ENCODE measurements at regions of chr1 and their contacts with region 1.

Region 1: GRCh38 chr1:212558693-212559480 is 49.7 kb upstream of the ATF3 start:
- DNase-seq: peak; percentile 83 to 93 (median 91)
- ATAC-seq: peak; percentile 97
- H3K4me3 ChIP-seq: peak overlapping the region; percentile 54
- H3K4me3 Mint-ChIP-seq: peak overlapping the region; percentile 82 to 95 (median 90)
- H3K27ac ChIP-seq: peak overlapping the region; percentile 74
- H3K27ac Mint-ChIP-seq: peak overlapping the region; percentile 91 to 99 (median 98)
- H3K4me1 ChIP-seq: peaks cover 7 to 13% of the 10 kb centered on the region in 2 donors
- H3K4me1 Mint-ChIP-seq: peaks cover 6 to 15% (median 9%) of the 10 kb centered on the region in 7 donors
- H3K27me3 ChIP-seq: no peaks in the 10 kb centered on the region
- H3K27me3 Mint-ChIP-seq: peaks cover 0 to 45% (median 0%) of the 10 kb centered on the region in 5 donors

Region 2: DNA sequence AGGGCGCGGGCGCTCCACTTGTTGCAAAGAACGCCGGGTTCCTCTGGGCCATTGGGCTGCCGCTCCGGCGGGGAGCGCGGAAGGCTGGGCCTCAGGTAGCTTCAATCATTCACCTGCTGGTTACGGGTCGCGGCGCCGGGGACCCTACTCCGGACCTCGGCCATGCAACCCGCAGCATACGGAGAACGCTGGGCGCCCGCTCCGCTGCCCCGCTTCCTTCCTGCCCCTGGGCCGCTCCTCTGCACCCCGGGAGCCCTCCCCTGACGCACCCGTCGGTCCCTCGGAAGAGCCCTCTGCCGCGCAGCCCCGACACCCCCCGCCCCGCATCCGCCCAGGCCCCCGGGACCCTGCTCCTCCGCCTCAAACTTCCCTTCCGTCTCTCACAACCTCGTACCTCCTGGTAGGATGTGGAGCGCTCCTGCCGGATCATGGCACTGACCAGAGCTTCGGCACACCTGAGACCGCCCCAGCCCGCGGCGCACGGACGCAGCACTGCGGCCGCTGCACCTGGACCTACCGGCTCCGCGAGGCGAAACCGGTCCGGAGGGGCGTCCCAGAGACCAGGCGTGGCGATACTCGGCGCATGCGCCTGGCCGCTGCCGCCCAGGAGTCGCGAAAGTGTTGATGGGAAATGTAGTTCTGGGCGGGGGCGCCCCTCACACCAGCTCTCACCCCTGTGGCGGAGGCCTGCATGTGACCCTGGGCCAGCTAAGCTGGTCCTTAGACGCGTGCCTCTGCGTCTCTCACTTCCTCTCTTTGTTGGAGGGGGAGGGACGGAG is 144.4 kb before region 1 on chr1 and contains the start of gene PACC1:
- CTCF ChIA-PET with region 1: no interaction called
- POLR2A ChIA-PET with region 1: no interaction called
- intact Hi-C with region 1: loop called in 1 of 2 experiments (anchors 2 kb)
- DNase-seq: peak; percentile 77 to 89 (median 86)
- ATAC-seq: peak; percentile 98
- H3K4me3 ChIP-seq: peak within 1 kb of the TSS; percentile 98
- H3K4me3 Mint-ChIP-seq: peak within 1 kb of the TSS; percentile 87 to 100 (median 94)
- H3K27ac ChIP-seq: peak within 1 kb of the TSS; percentile 71
- H3K27ac Mint-ChIP-seq: peak within 1 kb of the TSS; percentile 74 to 94 (median 89)
- H3K4me1 ChIP-seq: peaks cover 15 to 19% of the 10 kb centered on the region in 2 donors
- H3K4me1 Mint-ChIP-seq: peaks cover 22 to 46% (median 40%) of the 10 kb centered on the region in 7 donors
- H3K27me3 ChIP-seq: no peaks in the 10 kb centered on the region
- H3K27me3 Mint-ChIP-seq: no peaks in the 10 kb centered on the region
- total RNA-seq, gene PACC1: 7.9 to 13.4 (median 12.0) TPM

Region 3: GRCh38 chr1:212477014-212477679 is 81.7 kb before region 1 on chr1:
- CTCF ChIA-PET with region 1: interaction called, 3 read pairs
- POLR2A ChIA-PET with region 1: no interaction called
- intact Hi-C with region 1: loop called in 1 of 2 experiments (anchors 2 kb)
- DNase-seq: peak; percentile 34 to 72 (median 65)
- ATAC-seq: peak; percentile 96
- H3K4me3 ChIP-seq: no peak overlapping the region
- H3K4me3 Mint-ChIP-seq: peak overlapping the region in 7 of 10 donors; percentile 12 to 65 (median 43)
- H3K27ac ChIP-seq: no peak overlapping the region
- H3K27ac Mint-ChIP-seq: peak overlapping the region in 1 of 9 donors; percentile 35
- H3K4me1 ChIP-seq: peaks cover 0 to 12% of the 10 kb centered on the region in 2 donors
- H3K4me1 Mint-ChIP-seq: peaks cover 3 to 22% (median 13%) of the 10 kb centered on the region in 7 donors
- H3K27me3 ChIP-seq: no peaks in the 10 kb centered on the region
- H3K27me3 Mint-ChIP-seq: peaks cover 0 to 30% (median 4%) of the 10 kb centered on the region in 5 donors

Region 4: DNA sequence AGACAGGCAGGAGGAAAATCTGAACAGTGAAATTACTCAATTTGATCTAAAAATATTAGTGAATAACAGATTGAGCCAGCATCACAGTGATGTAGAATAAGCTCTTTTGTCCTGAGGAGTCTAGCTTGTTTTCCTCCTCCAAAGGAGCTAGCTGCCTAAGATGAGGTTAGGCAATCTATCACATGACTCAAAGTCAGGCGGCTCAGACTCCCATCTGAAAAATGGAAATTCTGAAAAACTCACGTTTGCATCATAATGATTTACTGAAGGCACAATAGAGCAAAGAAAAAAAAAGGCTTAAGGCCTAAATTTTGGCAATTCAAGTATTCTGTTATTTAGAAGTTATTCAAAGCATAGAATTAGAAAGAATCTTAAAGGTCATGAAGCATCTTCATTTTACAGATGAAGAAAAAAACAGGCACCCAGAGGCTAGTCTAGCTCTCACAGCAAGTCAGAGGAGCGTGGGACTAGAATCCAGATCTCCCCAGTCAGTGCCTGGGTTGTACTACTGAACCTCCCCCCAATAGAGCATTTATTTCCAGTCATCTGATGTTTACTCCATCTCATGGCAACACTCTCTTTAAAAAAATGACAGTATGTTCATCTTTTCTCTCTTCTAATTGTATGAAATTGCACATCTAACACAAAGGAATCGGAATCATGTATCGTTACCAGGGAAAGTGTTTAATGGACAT is 12.8 kb before region 1 on chr1:
- CTCF ChIA-PET with region 1: no interaction called
- POLR2A ChIA-PET with region 1: no interaction called
- intact Hi-C with region 1: no loop called
- DNase-seq: no peak
- ATAC-seq: peak; percentile 50
- H3K4me3 ChIP-seq: no peak overlapping the region
- H3K4me3 Mint-ChIP-seq: no peak overlapping the region
- H3K27ac ChIP-seq: no peak overlapping the region
- H3K27ac Mint-ChIP-seq: no peak overlapping the region
- H3K4me1 ChIP-seq: no peaks in the 10 kb centered on the region
- H3K4me1 Mint-ChIP-seq: peaks cover 0 to 2% (median 0%) of the 10 kb centered on the region in 7 donors
- H3K27me3 ChIP-seq: no peaks in the 10 kb centered on the region
- H3K27me3 Mint-ChIP-seq: peaks cover 7 to 55% (median 18%) of the 10 kb centered on the region in 5 donors

Region 5: GRCh38 chr1:212608209-212608955 is 49.5 kb after region 1 on chr1 and contains the start of gene ATF3:
- CTCF ChIA-PET with region 1: no interaction called
- POLR2A ChIA-PET with region 1: interaction called, 3 read pairs
- intact Hi-C with region 1: loop called (anchors 1 kb)
- DNase-seq: peak; percentile 27 to 90 (median 47)
- ATAC-seq: peak; percentile 87
- H3K4me3 ChIP-seq: peak within 1 kb of the TSS; percentile 70
- H3K4me3 Mint-ChIP-seq: peak within 1 kb of the TSS; percentile 90 to 98 (median 95)
- H3K27ac ChIP-seq: no peak within 1 kb of the TSS
- H3K27ac Mint-ChIP-seq: peak within 1 kb of the TSS; percentile 40 to 98 (median 76)
- H3K4me1 ChIP-seq: peaks cover 17 to 23% of the 10 kb centered on the region in 2 donors
- H3K4me1 Mint-ChIP-seq: peaks cover 17 to 55% (median 21%) of the 10 kb centered on the region in 7 donors
- H3K27me3 ChIP-seq: peaks cover 17 to 26% of the 10 kb centered on the region in 2 donors
- H3K27me3 Mint-ChIP-seq: peaks cover 47 to 66% (median 58%) of the 10 kb centered on the region in 5 donors
- total RNA-seq, gene ATF3: 0.57 to 83.4 (median 12.5) TPM

Region 6: DNA sequence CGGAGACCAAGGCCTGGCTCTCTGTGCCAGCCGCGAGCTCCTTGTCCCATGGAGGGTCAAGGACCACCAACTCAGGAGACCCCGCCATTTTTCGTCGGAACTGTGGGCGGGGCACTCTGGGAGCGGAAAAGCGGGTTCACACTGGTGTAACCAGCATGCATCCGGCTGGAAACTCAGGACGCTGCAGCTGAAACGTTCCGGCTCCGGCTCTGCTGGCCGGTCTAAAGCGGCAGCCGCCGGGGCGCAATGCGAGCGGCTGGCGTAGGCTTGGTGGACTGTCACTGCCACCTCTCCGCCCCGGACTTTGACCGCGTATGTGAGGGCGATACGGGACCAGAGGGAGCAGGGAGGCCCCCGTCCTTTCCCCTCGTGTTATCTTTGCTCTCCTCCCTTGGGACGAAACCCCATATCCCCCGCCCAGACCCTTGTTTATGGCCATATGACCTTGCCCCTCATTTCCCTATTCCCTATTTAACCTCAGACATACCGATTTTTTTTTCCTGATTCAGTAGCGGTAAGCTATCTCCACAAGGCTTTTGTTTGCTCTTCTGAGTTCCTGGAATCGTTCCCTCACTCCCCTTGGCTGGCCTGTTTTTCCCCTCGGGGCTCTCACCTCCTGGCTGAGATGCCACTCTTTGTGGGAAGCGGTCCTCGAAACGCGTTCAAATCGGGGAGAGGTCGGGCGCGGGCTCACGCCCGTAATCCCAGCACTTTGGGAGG is 232.9 kb after region 1 on chr1 and contains the starts of genes NSL1 and TATDN3:
- CTCF ChIA-PET with region 1: no interaction called
- POLR2A ChIA-PET with region 1: interaction called, 5 read pairs
- intact Hi-C with region 1: loop called (anchors 1 to 5 kb)
- DNase-seq: peak; percentile 82 to 99 (median 92)
- ATAC-seq: peak; percentile 98
- H3K4me3 ChIP-seq: peak within 1 kb of the TSS; percentile 100
- H3K4me3 Mint-ChIP-seq: peak within 1 kb of the TSS; percentile 86 to 98 (median 95)
- H3K27ac ChIP-seq: peak within 1 kb of the TSS; percentile 83
- H3K27ac Mint-ChIP-seq: peak within 1 kb of the TSS; percentile 87 to 99 (median 96)
- H3K4me1 ChIP-seq: peaks cover 17 to 19% of the 10 kb centered on the region in 2 donors
- H3K4me1 Mint-ChIP-seq: peaks cover 27 to 58% (median 43%) of the 10 kb centered on the region in 7 donors
- H3K27me3 ChIP-seq: no peaks in the 10 kb centered on the region
- H3K27me3 Mint-ChIP-seq: no peaks in the 10 kb centered on the region
- total RNA-seq, gene NSL1: 22.3 to 42.3 (median 37.7) TPM
- total RNA-seq, gene TATDN3: 10.0 to 17.7 (median 13.9) TPM

Region 7: DNA sequence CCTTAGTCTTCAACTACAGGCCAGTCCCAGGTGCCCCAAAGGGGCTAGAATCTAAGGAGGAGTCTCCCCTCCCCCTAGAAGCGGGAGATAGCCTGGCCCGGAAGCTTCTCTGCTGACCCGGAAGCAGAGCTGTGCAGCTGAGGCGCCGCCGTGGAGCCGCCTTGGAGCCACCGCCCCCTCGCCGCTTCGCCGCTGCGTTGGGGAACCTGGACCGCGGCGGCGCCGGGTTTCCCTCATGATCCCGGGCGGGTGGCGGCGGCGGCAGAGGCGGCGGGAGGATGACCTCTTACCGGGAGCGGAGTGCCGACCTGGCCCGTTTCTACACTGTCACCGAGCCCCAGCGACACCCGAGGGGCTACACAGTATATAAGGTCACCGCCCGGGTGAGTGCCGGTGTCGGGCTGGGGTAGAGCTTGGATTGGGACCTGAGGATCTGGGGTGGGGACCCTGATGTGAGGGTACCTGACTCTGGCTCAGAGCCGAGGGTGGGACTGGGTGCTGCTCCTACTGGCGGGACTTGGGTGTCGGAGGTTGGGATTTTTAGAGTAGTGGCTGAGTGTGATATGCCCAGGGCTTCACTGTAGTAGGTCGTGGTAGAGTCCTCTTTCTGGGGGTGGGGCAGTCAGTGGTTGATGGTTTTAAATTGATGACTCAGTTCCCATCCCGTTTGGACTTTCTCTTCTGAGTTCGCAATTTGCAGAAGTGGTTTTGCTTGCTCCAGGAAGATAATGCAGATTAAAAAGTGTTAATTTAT is 492.4 kb after region 1 on chr1 and contains the start of gene RPS6KC1:
- CTCF ChIA-PET with region 1: no interaction called
- POLR2A ChIA-PET with region 1: no interaction called
- intact Hi-C with region 1: loop called in 1 of 2 experiments (anchors 1 kb)
- DNase-seq: peak; percentile 64 to 82 (median 79)
- ATAC-seq: peak; percentile 97
- H3K4me3 ChIP-seq: peak within 1 kb of the TSS; percentile 97
- H3K4me3 Mint-ChIP-seq: peak within 1 kb of the TSS; percentile 93 to 99 (median 96)
- H3K27ac ChIP-seq: peak within 1 kb of the TSS; percentile 72
- H3K27ac Mint-ChIP-seq: peak within 1 kb of the TSS; percentile 75 to 98 (median 93)
- H3K4me1 ChIP-seq: peaks cover 0 to 13% of the 10 kb centered on the region in 2 donors
- H3K4me1 Mint-ChIP-seq: peaks cover 23 to 39% (median 35%) of the 10 kb centered on the region in 7 donors
- H3K27me3 ChIP-seq: peaks cover 0 to 4% of the 10 kb centered on the region in 2 donors
- H3K27me3 Mint-ChIP-seq: peaks cover 9 to 27% (median 23%) of the 10 kb centered on the region in 5 donors
- total RNA-seq, gene RPS6KC1: 9.1 to 18.9 (median 14.3) TPM